ENCODE measurements at regions of chr17 and their contacts with region 1.

Region 1: DNA sequence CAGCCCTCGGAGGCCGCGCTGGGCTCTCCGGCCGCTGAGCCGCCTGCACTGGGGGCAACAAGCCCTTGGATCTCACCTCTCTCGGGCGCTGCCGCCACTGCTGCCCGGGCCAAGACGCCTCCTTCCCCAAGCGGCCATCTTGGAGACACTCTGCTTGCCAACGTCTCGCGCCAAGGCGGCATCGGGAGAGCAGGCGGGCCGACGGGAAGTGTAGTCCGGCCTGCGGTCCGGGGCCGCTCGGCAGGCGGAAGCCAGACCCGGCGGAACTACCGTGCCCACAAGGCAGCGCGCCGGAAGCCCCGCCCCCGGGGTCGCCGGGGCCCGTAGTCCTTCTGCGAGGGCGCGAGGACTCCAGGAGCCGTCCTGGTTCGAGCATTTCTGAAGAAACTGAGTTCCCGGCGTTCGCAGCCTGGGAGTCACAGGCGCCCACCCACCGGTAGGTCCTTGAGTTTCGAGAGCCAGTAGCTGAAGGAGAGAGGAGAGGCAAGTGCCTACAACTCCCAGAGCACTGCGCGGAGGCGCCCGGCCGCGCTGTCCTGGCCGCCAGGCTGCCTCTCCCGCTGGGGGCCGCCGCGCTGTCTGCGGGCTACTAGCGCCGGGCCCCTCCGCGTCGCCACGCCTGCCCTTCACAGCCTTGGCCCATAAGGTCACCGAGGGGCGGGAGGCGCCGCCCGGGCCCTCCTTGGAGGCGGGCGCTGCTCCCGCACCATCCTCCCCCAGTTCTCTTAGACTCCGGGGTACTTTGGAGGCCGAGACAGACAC is at the start of gene TMEM11:
- DNase-seq: peak; percentile 95 to 97
- ATAC-seq: peak; percentile 94 to 98 (median 96)
- H3K4me3 ChIP-seq: peak within 1 kb of the TSS; percentile 81 to 100 (median 95)
- H3K27ac ChIP-seq: peak within 1 kb of the TSS; percentile 83 to 99 (median 95)
- H3K4me1 ChIP-seq: peaks cover 36 to 64% (median 55%) of the 10 kb centered on the region in 9 donors
- H3K27me3 ChIP-seq: no peaks in the 10 kb centered on the region
- CTCF ChIP-seq: peak in 4 of 9 donors; percentile 8 to 48 (median 33)
- total RNA-seq, gene TMEM11: 20.8 to 37.2 (median 27.6) TPM

Region 2: DNA sequence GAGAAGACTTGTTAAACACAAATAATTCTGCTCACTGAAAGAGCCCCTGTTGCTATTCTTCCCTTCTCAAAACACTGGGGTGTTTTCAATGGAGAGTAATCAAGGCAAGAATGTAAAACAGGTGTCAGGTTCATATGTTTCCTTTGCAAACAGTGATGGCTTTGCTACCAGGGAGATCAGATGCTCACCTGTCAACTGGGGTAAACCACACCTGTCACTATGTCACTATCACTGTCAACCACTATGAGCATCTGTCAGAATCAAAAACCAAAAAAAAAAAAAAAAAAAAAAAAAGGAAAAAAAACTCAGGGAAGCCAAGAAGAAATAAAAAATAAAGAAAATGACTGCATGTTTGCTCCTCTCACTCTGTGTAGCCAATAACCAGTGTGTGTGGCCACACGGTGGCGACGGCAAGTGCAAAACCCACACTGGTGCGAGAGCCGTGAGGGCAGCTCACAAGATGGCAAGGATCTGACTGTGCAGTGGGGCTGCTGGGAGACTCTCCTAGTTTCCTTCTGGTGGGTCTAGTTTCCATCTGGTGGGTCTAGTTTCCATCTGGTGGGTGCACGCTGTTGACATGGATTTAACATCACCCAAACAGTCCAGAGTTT is 194.1 kb before region 1 on chr17:
- intact Hi-C with region 1: loop called in 1 of 10 experiments (anchors 10 kb)
- DNase-seq: no peak
- ATAC-seq: peak; percentile 51 to 70 (median 66)
- H3K4me3 ChIP-seq: no peak overlapping the region
- H3K27ac ChIP-seq: no peak overlapping the region
- H3K4me1 ChIP-seq: peaks cover 10 to 58% (median 28%) of the 10 kb centered on the region in 9 donors
- H3K27me3 ChIP-seq: no peaks in the 10 kb centered on the region
- CTCF ChIP-seq: peak in 7 of 9 donors; percentile 13 to 53 (median 43)

Region 3: GRCh38 chr17:21126645-21127510 is 87.3 kb before region 1 on chr17 and contains the start of gene DHRS7B:
- intact Hi-C with region 1: loop called in 9 of 10 experiments (anchors 2 to 10 kb)
- DNase-seq: peak; percentile 96 to 97
- ATAC-seq: peak; percentile 96 to 98 (median 98)
- H3K4me3 ChIP-seq: peak within 1 kb of the TSS; percentile 61 to 96 (median 91)
- H3K27ac ChIP-seq: peak within 1 kb of the TSS; percentile 82 to 96 (median 94)
- H3K4me1 ChIP-seq: peaks cover 4 to 63% (median 39%) of the 10 kb centered on the region in 9 donors
- H3K27me3 ChIP-seq: no peaks in the 10 kb centered on the region
- CTCF ChIP-seq: peak in 1 of 9 donors; percentile 13
- total RNA-seq, gene DHRS7B: 17.1 to 48.0 (median 26.0) TPM

Region 4: GRCh38 chr17:21161498-21162393 is 52.5 kb before region 1 on chr17:
- intact Hi-C with region 1: loop called in 3 of 10 experiments (anchors 5 to 10 kb)
- DNase-seq: no peak
- ATAC-seq: peak in 5 of 8 donors; percentile 25 to 63 (median 55)
- H3K4me3 ChIP-seq: no peak overlapping the region
- H3K27ac ChIP-seq: peak overlapping the region in 9 of 10 donors; percentile 31 to 74 (median 64)
- H3K4me1 ChIP-seq: peaks cover 5 to 48% (median 30%) of the 10 kb centered on the region in 9 donors
- H3K27me3 ChIP-seq: no peaks in the 10 kb centered on the region
- CTCF ChIP-seq: no peak

Region 5: DNA sequence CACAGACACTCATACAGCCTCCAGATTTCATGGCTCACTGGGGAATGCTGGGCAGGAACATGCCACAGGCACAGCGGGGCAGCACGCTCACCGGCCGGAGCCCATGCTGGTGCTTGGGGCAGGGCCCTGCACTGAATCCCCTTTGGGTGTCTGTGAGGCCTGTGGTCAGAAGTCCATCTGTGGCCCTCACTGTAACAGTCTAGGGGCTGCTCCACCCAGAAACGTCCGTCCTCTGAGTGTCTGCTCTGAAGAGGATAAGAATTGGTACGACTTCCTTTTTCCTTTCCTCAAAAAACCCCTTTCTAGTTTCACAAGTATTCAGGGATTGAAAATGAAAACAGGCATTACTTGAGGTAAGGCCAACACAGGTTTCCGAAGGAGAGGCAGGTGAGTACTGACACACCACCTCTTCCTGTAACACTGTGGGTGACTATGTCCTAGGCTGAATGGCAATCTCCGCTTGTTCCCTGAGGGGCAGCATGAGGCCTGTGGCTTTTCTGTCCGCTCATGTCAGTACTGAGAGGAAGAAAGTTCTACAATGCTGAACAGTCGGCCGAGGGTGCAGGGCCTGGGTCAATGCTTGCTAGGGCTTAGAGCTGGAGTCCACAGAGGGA is 42.8 kb before region 1 on chr17:
- intact Hi-C with region 1: loop called in 4 of 10 experiments (anchors 5 to 10 kb)
- DNase-seq: no peak
- ATAC-seq: no peak
- H3K4me3 ChIP-seq: no peak overlapping the region
- H3K27ac ChIP-seq: peak overlapping the region in 6 of 10 donors; percentile 0 to 60 (median 29)
- H3K4me1 ChIP-seq: peaks cover 4 to 80% (median 56%) of the 10 kb centered on the region in 9 donors
- H3K27me3 ChIP-seq: no peaks in the 10 kb centered on the region
- CTCF ChIP-seq: no peak

Region 6: GRCh38 chr17:21252796-21253645 is 38.8 kb after region 1 on chr17 and contains the start of gene NATD1:
- intact Hi-C with region 1: loop called in 3 of 10 experiments (anchors 2 to 5 kb)
- DNase-seq: peak; percentile 86 to 90
- ATAC-seq: peak; percentile 64 to 90 (median 84)
- H3K4me3 ChIP-seq: peak within 1 kb of the TSS; percentile 49 to 82 (median 64)
- H3K27ac ChIP-seq: peak within 1 kb of the TSS; percentile 68 to 88 (median 78)
- H3K4me1 ChIP-seq: peaks cover 0 to 54% (median 37%) of the 10 kb centered on the region in 9 donors
- H3K27me3 ChIP-seq: no peaks in the 10 kb centered on the region
- CTCF ChIP-seq: no peak
- total RNA-seq, gene NATD1: 11.9 to 23.1 (median 19.6) TPM

Region 7: DNA sequence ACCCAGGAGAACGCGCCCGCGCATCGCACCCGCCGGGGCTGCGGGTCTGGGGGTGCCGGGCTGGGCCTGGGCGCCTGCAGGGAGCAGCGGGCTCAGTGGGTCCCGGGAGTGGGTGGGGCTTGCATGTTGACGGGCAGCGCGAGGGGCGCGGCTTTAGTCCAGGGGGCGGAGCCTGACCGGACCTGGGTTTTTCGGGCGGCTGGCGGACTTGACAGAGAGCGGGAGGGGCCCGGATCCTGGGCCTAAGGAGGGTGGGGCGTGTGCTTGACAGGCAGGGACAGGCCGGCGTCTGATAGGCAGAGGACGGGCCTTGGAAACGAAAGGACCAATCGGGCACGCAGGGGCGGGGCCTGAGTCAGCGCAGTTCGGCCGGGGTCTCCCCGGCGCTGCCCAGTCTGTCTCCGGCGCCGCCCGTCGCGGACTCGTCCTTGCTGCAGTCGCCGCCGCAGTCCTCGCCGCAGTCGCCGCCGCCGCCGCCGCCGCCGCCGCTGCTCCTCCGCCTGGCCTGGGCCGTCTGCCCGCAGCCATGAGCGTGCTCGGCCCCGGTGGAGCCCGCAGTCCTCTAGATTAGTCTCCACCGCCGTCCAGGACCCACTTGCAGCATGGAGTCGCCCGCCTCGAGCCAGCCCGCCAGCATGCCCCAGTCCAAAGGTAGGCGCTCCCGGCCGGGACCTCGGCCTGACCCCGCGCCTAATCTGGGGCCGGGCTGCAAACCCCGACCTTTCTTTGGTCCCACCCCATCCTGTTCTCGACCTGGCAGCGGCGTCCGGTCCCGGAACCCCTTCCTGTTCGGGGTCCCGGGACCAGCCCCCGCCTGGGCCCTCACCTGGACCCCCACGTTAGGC is 70.3 kb after region 1 on chr17 and contains the start of gene MAP2K3:
- intact Hi-C with region 1: loop called in 2 of 10 experiments (anchors 10 kb)
- DNase-seq: peak; percentile 99
- ATAC-seq: peak; percentile 79 to 91 (median 86)
- H3K4me3 ChIP-seq: peak within 1 kb of the TSS; percentile 67 to 99 (median 97)
- H3K27ac ChIP-seq: peak within 1 kb of the TSS; percentile 83 to 99 (median 96)
- H3K4me1 ChIP-seq: peaks cover 35 to 71% (median 49%) of the 10 kb centered on the region in 9 donors
- H3K27me3 ChIP-seq: no peaks in the 10 kb centered on the region
- CTCF ChIP-seq: peak in 1 of 9 donors; percentile 0
- total RNA-seq, gene MAP2K3: 28.9 to 71.6 (median 60.4) TPM

Measured in heart right ventricle (tissue), 16 donors.